CD8-positive, alpha-beta T cell (primary cell): ENCODE measurements at regions of chrX and their contacts with region 1.

Region 1: GRCh38 chrX:48801280-48802088 is at the start of gene HDAC6:
- DNase-seq: peak; percentile 85 to 98 (median 91)
- ATAC-seq: peak; percentile 85
- H3K4me3 ChIP-seq: peak within 1 kb of the TSS; percentile 67 to 89
- H3K4me3 Mint-ChIP-seq: peak within 1 kb of the TSS; percentile 94
- H3K27ac ChIP-seq: peak within 1 kb of the TSS; percentile 92 to 98
- H3K27ac Mint-ChIP-seq: peak within 1 kb of the TSS; percentile 99
- H3K4me1 ChIP-seq: peaks cover 13% of the 10 kb centered on the region
- H3K4me1 Mint-ChIP-seq: peaks cover 17% of the 10 kb centered on the region
- H3K27me3 ChIP-seq: no peaks in the 10 kb centered on the region
- H3K27me3 Mint-ChIP-seq: no peaks in the 10 kb centered on the region
- CTCF ChIP-seq: no peak
- total RNA-seq, gene HDAC6: 73.8 to 80.7 TPM

Region 2: DNA sequence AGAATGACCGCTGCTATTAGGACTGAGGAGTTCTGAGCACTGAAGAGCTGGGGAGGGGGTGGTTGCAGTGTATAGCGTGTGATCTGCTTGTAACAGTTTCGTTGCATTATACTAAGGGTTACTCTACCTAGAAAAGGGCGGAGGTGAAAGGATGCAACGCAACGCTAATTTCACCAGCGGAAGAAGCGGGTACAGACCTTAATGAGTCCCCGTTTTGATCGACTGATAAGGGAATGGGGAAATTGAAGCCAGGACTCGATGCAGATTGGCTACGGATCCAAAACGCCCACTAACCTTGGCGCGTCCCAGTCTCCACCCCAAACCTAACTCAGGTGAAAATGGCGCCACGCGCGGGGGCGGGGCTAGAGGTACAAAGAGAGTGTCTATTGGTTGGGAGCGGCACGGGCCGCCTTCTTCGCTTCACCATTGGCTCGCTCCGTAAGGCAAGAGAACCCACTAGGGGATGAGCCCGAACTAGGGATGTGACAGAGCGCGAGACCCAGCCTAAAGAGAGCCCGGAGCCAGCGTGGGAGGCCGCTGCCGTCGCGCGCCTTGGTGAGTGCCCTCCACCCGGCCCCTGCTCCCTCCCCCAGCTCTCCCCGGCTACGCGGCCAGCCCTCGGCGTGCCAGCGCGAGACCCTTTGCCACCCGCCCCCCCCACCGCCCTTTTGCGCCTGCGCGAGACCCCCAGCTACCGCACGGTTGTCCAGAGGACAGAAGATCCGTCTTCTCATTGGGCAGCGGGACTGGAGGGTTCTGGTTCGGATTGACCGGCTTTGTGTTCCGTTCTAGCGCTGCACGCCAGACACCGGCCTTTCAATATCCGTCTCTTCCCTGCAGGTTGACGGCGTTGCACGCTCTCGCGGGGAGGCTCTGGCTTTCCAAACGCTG is 279.9 kb before region 1 on chrX and contains the start of gene EBP:
- CTCF ChIA-PET with region 1: no interaction called
- POLR2A ChIA-PET with region 1: no interaction called
- intact Hi-C with region 1: loop called in 1 of 2 experiments (anchors 5 kb)
- DNase-seq: peak; percentile 85 to 96 (median 92)
- ATAC-seq: peak; percentile 96
- H3K4me3 ChIP-seq: peak within 1 kb of the TSS; percentile 72 to 83
- H3K4me3 Mint-ChIP-seq: peak within 1 kb of the TSS; percentile 87
- H3K27ac ChIP-seq: peak within 1 kb of the TSS; percentile 80 to 90
- H3K27ac Mint-ChIP-seq: peak within 1 kb of the TSS; percentile 95
- H3K4me1 ChIP-seq: peaks cover 19% of the 10 kb centered on the region
- H3K4me1 Mint-ChIP-seq: peaks cover 38% of the 10 kb centered on the region
- H3K27me3 ChIP-seq: no peaks in the 10 kb centered on the region
- H3K27me3 Mint-ChIP-seq: no peaks in the 10 kb centered on the region
- CTCF ChIP-seq: no peak
- total RNA-seq, gene EBP: 55.2 to 56.9 TPM

Region 3: GRCh38 chrX:48696301-48697181 is 104.9 kb before region 1 on chrX and contains the start of gene SUV39H1:
- CTCF ChIA-PET with region 1: no interaction called
- POLR2A ChIA-PET with region 1: interaction called, 6 read pairs
- intact Hi-C with region 1: loop called (anchors 1 kb)
- DNase-seq: peak; percentile 67 to 94 (median 79)
- ATAC-seq: peak; percentile 93
- H3K4me3 ChIP-seq: peak within 1 kb of the TSS; percentile 63 to 72
- H3K4me3 Mint-ChIP-seq: peak within 1 kb of the TSS; percentile 89
- H3K27ac ChIP-seq: peak within 1 kb of the TSS; percentile 85 to 87
- H3K27ac Mint-ChIP-seq: peak within 1 kb of the TSS; percentile 98
- H3K4me1 ChIP-seq: peaks cover 15% of the 10 kb centered on the region
- H3K4me1 Mint-ChIP-seq: peaks cover 27% of the 10 kb centered on the region
- H3K27me3 ChIP-seq: no peaks in the 10 kb centered on the region
- H3K27me3 Mint-ChIP-seq: no peaks in the 10 kb centered on the region
- CTCF ChIP-seq: no peak
- total RNA-seq, gene SUV39H1: 8.2 to 8.6 TPM

Region 4: DNA sequence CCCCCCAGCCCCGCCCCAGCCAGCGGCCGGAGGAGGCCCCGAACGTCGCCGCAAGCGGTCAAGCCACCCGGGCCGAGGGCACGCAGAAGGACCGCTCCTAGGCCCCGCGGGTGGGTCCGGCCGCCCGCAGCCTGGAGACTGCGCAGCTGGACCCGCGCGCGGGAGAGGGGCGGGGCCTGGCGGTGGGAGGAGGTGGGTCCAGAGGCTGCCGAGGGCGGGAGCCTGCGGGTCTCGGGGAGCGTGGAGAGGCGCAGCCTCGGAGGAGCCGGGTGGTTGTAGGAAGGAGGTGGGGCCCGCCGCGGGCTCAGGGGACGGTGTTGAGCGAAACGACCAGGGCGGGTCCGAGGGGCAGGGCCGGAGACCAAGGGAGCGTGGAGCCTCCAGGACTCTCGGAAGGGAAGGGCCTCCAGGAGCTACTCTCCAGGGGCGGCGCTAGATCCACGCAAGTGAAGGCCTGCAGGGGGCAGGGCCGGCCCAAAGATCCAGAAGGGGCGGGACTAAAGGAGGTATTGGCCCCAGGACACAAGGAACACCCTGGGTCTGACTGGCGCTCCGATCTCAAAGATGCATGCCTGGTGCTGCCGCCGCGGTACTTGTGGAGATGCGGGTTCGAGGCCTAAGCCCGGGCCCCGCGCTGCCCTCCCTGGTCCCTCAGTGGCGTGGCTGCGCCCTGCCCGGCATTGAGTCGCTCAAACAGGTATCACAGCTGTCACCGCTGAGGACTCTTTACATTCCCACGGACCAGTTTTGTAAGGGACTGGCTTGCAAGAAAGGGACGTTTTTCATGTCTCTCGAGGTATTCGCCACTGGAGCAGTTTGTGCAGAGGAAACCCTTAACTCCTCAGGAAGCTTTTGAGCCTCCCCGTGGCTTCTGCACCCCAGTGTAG is 90.2 kb after region 1 on chrX:
- CTCF ChIA-PET with region 1: no interaction called
- POLR2A ChIA-PET with region 1: no interaction called
- intact Hi-C with region 1: loop called (anchors 2 to 10 kb)
- DNase-seq: peak; percentile 46 to 88 (median 75)
- ATAC-seq: peak; percentile 87
- H3K4me3 ChIP-seq: peak overlapping the region; percentile 56 to 59
- H3K4me3 Mint-ChIP-seq: peak overlapping the region; percentile 89
- H3K27ac ChIP-seq: peak overlapping the region; percentile 31 to 40
- H3K27ac Mint-ChIP-seq: peak overlapping the region; percentile 27
- H3K4me1 ChIP-seq: peaks cover 14% of the 10 kb centered on the region
- H3K4me1 Mint-ChIP-seq: peaks cover 29% of the 10 kb centered on the region
- H3K27me3 ChIP-seq: no peaks in the 10 kb centered on the region
- H3K27me3 Mint-ChIP-seq: no peaks in the 10 kb centered on the region
- CTCF ChIP-seq: peak; percentile 51

Region 5: GRCh38 chrX:48937054-48937907 is 135.8 kb after region 1 on chrX:
- CTCF ChIA-PET with region 1: interaction called, 3 read pairs
- POLR2A ChIA-PET with region 1: no interaction called
- intact Hi-C with region 1: loop called in 1 of 2 experiments (anchors 5 kb)
- DNase-seq: peak; percentile 79 to 95 (median 89)
- ATAC-seq: peak; percentile 67
- H3K4me3 ChIP-seq: peak overlapping the region; percentile 33 to 45
- H3K4me3 Mint-ChIP-seq: peak overlapping the region; percentile 83
- H3K27ac ChIP-seq: peak overlapping the region; percentile 82 to 89
- H3K27ac Mint-ChIP-seq: peak overlapping the region; percentile 99
- H3K4me1 ChIP-seq: peaks cover 81% of the 10 kb centered on the region
- H3K4me1 Mint-ChIP-seq: peaks cover 76% of the 10 kb centered on the region
- H3K27me3 ChIP-seq: no peaks in the 10 kb centered on the region
- H3K27me3 Mint-ChIP-seq: no peaks in the 10 kb centered on the region
- CTCF ChIP-seq: no peak

Region 6: GRCh38 chrX:48989483-48989882 is 188.0 kb after region 1 on chrX:
- CTCF ChIA-PET with region 1: no interaction called
- POLR2A ChIA-PET with region 1: no interaction called
- intact Hi-C with region 1: no loop called
- DNase-seq: no peak
- ATAC-seq: no peak
- H3K4me3 ChIP-seq: no peak overlapping the region
- H3K4me3 Mint-ChIP-seq: no peak overlapping the region
- H3K27ac ChIP-seq: no peak overlapping the region
- H3K27ac Mint-ChIP-seq: no peak overlapping the region
- H3K4me1 ChIP-seq: no peaks in the 10 kb centered on the region
- H3K4me1 Mint-ChIP-seq: no peaks in the 10 kb centered on the region
- H3K27me3 ChIP-seq: no peaks in the 10 kb centered on the region
- H3K27me3 Mint-ChIP-seq: no peaks in the 10 kb centered on the region
- CTCF ChIP-seq: no peak

Region 7: GRCh38 chrX:49100704-49101628 is 299.5 kb after region 1 on chrX:
- CTCF ChIA-PET with region 1: no interaction called
- POLR2A ChIA-PET with region 1: no interaction called
- intact Hi-C with region 1: loop called in 1 of 2 experiments (anchors 5 kb)
- DNase-seq: peak; percentile 71 to 94 (median 86)
- ATAC-seq: peak; percentile 89
- H3K4me3 ChIP-seq: peak overlapping the region; percentile 74
- H3K4me3 Mint-ChIP-seq: peak overlapping the region; percentile 89
- H3K27ac ChIP-seq: peak overlapping the region; percentile 71 to 81
- H3K27ac Mint-ChIP-seq: peak overlapping the region; percentile 94
- H3K4me1 ChIP-seq: peaks cover 6% of the 10 kb centered on the region
- H3K4me1 Mint-ChIP-seq: peaks cover 7% of the 10 kb centered on the region
- H3K27me3 ChIP-seq: no peaks in the 10 kb centered on the region
- H3K27me3 Mint-ChIP-seq: no peaks in the 10 kb centered on the region
- CTCF ChIP-seq: no peak